Heart left ventricle (tissue), 16 donors: ENCODE measurements at regions of chr12 and their contacts with region 1.

Region 1: DNA sequence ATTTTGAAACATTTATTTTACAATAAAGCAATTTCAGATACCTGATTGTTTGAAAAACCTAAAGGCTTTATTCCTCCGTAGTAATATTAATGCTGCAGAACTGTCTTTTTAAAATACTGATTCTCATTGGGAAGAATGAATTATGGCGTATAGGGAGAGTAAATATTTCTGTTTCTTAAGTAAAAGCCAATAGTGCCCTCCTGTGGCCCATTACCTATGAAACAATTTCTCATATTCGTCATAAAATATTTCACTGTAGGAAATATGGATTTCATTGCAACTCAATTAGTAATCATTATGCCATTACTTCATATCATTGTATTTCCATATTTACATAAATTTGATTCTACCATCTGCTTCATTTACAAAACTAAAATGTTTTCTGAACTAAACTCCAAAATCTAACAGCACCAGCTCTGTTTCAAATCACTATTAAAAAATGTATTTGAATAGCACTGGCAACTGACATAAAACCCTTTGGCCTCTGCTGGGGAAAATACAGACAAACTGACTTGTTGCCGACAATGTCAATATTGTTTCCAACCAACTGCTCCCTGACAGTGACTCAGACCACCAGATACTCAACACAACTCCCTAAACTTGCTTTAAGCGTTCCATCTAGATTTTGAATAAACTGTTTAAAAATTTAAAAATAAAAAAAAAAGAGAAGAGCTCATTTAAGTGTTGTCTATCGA is 290.3 kb downstream of the NAV3 start:
- DNase-seq: no peak
- ATAC-seq: no peak
- H3K4me3 ChIP-seq: no peak overlapping the region
- H3K27ac ChIP-seq: no peak overlapping the region
- H3K4me1 ChIP-seq: no peaks in the 10 kb centered on the region
- H3K27me3 ChIP-seq: no peaks in the 10 kb centered on the region
- CTCF ChIP-seq: peak in 5 of 12 donors; percentile 30 to 40 (median 37)
- POLR2A ChIP-seq: no peak

Region 2: DNA sequence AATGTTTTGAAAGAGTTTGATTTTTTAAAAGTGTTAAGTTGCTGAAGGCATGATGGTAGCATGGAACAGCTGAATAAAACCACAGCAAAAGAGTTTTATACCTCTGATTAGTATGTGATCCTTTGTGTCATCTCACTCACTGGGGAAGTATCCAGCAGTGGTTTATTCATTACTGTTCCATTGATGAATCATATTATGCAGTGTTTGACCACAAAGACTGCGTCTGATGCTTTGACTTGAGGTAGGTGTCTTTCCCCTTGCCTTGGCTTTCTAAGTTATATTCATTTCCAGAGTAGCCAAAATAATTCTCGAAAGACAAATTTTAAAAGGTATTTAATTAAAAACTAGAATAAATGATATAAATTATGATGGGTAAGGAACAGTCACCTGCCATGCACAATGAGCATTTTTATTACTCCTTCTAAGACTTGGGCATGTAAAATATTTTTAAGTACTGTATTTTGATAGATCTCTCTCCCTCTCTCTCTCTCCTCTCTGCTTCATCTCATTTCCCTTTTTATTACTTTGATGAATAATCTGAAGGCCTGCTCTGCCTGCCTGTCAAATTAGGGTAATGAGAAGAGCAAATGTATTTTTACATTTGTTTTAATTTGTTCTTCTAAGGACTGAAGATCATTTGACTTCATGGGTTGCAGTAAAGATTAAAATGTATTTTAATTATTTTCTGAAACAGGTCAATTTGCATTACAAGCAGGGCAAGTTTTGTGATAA is 125.4 kb before region 1 on chr12:
- intact Hi-C with region 1: loop called in 8 of 10 experiments (anchors 2 to 10 kb)
- DNase-seq: no peak
- ATAC-seq: no peak
- H3K4me3 ChIP-seq: no peak overlapping the region
- H3K27ac ChIP-seq: no peak overlapping the region
- H3K4me1 ChIP-seq: peaks cover 0 to 7% (median 0%) of the 10 kb centered on the region in 12 donors
- H3K27me3 ChIP-seq: no peaks in the 10 kb centered on the region
- CTCF ChIP-seq: no peak
- POLR2A ChIP-seq: no peak

Region 3: GRCh38 chr12:78002878-78003277 is 118.1 kb before region 1 on chr12:
- intact Hi-C with region 1: loop called in 8 of 10 experiments (anchors 2 to 10 kb)
- DNase-seq: no peak
- ATAC-seq: no peak
- H3K4me3 ChIP-seq: no peak overlapping the region
- H3K27ac ChIP-seq: no peak overlapping the region
- H3K4me1 ChIP-seq: peaks cover 0 to 7% (median 0%) of the 10 kb centered on the region in 12 donors
- H3K27me3 ChIP-seq: no peaks in the 10 kb centered on the region
- CTCF ChIP-seq: no peak
- POLR2A ChIP-seq: no peak

Region 4: DNA sequence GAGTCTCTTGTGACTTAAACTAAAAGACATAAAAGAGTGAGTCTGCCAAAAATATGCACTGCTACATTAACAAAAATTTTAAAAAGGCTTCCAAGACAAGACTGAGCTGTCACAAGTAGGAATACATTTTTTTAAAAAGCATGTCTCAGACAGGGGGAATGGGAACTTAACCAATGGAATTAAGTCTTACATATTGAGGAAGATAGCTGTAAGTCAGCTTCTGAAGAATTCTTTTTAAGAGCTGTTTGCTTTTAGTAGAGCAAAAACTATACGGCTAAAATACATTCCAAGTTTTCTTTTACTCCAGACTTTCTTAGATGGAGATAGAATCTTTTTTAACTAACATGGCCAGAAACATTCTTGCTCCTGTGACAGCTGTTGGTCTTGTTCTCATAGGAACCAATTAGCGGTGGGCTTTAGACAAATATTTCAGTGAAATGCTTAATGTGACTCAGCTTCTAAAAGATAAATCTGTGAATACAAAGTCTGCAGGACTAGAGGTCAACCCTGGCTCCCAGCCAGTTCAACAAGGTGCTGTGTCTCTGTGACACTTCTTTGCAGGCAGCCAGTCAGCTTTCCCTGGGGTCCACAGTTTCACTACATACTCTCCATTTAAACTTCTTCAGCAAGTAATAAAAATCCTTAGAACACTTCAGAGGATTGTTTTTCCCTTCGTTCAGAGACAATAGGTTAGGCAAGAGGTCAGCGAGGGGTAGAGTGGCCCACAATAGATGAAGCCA is 102.7 kb before region 1 on chr12:
- intact Hi-C with region 1: loop called in 1 of 10 experiments (anchors 10 kb)
- DNase-seq: peak in 1 of 5 donors; percentile 45
- ATAC-seq: no peak
- H3K4me3 ChIP-seq: no peak overlapping the region
- H3K27ac ChIP-seq: no peak overlapping the region
- H3K4me1 ChIP-seq: no peaks in the 10 kb centered on the region
- H3K27me3 ChIP-seq: no peaks in the 10 kb centered on the region
- CTCF ChIP-seq: no peak
- POLR2A ChIP-seq: no peak

Region 5: DNA sequence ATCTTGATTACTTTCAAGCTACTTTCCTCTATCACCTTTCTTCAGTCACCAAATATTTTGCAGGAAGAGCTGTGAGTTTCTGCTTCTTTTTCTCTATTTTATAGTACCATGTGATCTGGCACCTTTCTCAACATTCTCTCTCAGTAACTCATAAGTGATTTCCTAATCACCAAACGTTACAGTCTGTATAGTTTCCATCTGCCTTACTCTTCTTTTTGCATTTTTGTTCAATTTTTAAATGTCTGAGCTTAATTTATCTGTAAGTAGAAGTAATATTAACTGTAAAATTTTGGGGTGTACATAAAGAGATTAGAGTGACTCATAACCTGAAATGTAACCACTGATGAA is 321.4 kb after region 1 on chr12:
- intact Hi-C with region 1: no loop called
- DNase-seq: no peak
- ATAC-seq: no peak
- H3K4me3 ChIP-seq: no peak overlapping the region
- H3K27ac ChIP-seq: no peak overlapping the region
- H3K4me1 ChIP-seq: no peaks in the 10 kb centered on the region
- H3K27me3 ChIP-seq: no peaks in the 10 kb centered on the region
- CTCF ChIP-seq: no peak
- POLR2A ChIP-seq: no peak